Activated CD4-positive, alpha-beta T cell treated with anti-CD3 and anti-CD28 coated beads for 36 hours (primary cell): ENCODE measurements at regions of chr2 and their contacts with region 1.

Region 1: DNA sequence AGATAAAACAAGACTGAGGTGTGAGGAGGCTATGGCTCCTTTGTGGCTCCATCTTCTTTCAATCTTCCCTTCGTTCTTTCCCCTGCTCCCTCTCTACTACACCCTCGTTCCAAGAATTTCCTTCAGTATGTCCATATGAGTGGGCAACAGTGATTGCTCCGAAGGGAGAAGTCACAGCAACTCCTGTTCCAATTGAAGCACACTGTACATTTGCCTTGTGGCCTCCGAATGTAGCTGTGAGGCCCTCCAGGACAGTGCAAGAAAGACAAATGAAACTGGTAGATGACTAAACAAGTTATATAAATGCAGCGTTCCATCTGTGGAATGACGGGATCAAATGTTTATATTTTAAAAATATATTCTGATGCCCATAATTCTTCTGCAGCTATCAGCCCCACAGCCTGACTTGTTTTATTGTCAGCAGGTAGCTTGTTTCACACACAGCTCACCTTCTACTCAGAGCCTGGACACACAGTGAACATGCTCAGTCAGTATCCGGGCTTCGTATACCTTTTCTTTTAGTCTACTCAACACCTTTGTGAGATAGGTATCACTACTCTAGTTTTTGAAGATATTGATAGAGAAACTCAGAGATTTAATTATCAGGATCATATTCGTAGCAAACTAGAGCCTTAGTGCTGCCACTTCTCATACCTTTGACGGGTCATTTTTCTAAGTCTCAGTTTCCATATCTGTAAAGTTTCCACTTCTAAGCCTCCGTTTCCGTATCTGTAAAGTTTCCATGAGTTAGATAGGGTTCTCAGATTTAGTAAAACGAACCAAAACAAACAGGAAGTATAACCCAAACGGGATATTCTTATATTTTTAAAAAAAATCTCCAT is 216.7 kb upstream of the STON1 start:
- DNase-seq: peak; percentile 29
- ATAC-seq: peak; percentile 4
- H3K4me3 Mint-ChIP-seq: peak overlapping the region; percentile 84
- H3K27ac Mint-ChIP-seq: peak overlapping the region; percentile 98
- H3K4me1 Mint-ChIP-seq: peaks cover 25% of the 10 kb centered on the region
- H3K27me3 Mint-ChIP-seq: no peaks in the 10 kb centered on the region

Region 2: DNA sequence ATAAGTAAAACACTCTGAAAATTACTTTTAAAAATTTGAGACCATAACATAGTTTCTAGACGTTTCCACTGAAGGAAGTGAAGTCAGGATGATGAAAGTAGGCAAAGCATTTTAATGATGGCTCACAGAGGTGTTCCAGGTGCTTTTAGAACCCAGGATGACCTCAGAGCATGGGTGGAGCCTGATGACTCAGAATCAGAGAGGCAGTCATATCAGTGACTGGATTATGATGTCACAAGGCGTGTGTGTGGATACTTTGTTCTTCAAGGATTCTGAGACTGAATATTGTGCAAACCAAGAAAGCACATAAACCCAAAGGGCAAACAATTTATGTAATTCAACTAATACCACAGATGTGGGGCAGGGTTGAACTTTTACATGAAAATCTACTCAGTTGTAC is 199.0 kb before region 1 on chr2:
- CTCF ChIA-PET with region 1: no interaction called
- POLR2A ChIA-PET with region 1: no interaction called
- intact Hi-C with region 1: loop called in 1 of 2 experiments (anchors 1 kb)
- DNase-seq: peak; percentile 83
- ATAC-seq: peak; percentile 81
- H3K4me3 Mint-ChIP-seq: no peak overlapping the region
- H3K27ac Mint-ChIP-seq: peak overlapping the region; percentile 37
- H3K4me1 Mint-ChIP-seq: peaks cover 24% of the 10 kb centered on the region
- H3K27me3 Mint-ChIP-seq: no peaks in the 10 kb centered on the region

Region 3: DNA sequence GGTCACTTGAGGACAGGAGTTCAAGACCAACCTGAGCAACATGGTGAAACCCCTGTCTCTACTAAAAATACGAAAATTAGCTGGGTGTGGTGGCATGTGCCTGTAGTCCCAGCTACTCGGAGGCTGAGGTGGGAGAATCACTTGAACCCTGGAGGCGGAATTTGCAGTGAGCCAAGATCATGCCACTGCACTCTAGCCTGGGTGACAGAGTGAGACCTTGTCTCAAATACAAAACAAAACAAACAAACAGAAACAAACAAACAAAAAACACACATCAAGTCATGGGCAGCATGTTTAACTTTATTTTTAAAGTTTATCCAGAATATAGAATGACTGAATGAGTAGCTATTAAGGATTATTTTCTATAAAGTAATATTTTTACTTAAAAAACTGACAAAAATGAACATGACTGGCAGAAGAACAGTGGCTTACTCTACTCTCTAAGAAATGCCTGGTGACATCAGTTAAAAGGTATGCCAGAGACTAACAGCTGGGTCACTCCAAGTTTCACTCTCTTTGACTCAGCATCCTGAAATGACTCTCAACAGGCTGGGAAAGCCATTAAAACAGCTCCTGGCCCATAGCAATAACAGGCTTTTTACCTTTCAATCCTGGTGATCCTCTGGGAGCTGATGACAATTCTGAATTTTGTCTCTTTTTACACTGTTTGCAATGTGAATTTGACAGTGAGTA is 64.9 kb before region 1 on chr2:
- CTCF ChIA-PET with region 1: interaction called, 4 read pairs
- POLR2A ChIA-PET with region 1: interaction called, 3 read pairs
- intact Hi-C with region 1: loop called (anchors 1 to 2 kb)
- DNase-seq: peak; percentile 34
- ATAC-seq: peak; percentile 94
- H3K4me3 Mint-ChIP-seq: no peak overlapping the region
- H3K27ac Mint-ChIP-seq: no peak overlapping the region
- H3K4me1 Mint-ChIP-seq: peaks cover 12% of the 10 kb centered on the region
- H3K27me3 Mint-ChIP-seq: no peaks in the 10 kb centered on the region